Gastrocnemius medialis (tissue), 4 donors: ENCODE measurements at regions of chr2 and their contacts with region 1.

Region 1: GRCh38 chr2:186503848-186504606 is 18.0 kb downstream of the ZC3H15 start:
- DNase-seq: no peak
- ATAC-seq: no peak
- H3K4me3 ChIP-seq: no peak overlapping the region
- H3K27ac ChIP-seq: no peak overlapping the region
- H3K4me1 ChIP-seq: no peaks in the 10 kb centered on the region
- H3K27me3 ChIP-seq: no peaks in the 10 kb centered on the region
- CTCF ChIP-seq: peak; percentile 18 to 60 (median 55)
- POLR2A ChIP-seq: no peak

Region 2: DNA sequence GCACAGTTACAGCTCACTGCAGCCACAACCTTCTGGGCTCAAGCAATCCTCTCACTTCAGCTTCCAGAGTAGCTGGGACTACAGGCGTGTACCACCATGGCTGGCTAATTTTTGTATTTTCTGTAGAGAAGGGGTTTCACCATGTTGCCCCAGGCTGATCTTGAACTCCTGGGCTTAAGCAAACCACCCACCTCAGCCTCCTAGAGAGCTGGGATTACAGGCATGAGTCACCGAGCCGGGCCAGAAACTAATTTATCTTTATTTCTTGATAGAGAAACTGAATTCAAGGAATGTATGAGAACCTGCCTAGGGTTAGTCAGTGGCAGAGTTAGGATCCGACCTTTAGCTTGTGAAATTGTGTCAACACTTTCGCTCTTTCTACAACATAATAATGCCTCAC is 66.6 kb after region 1 on chr2:
- in situ Hi-C with region 1: no loop called
- intact Hi-C with region 1: no loop called
- DNase-seq: no peak
- ATAC-seq: no peak
- H3K4me3 ChIP-seq: no peak overlapping the region
- H3K27ac ChIP-seq: no peak overlapping the region
- H3K4me1 ChIP-seq: no peaks in the 10 kb centered on the region
- H3K27me3 ChIP-seq: no peaks in the 10 kb centered on the region
- CTCF ChIP-seq: no peak
- POLR2A ChIP-seq: no peak

Region 3: DNA sequence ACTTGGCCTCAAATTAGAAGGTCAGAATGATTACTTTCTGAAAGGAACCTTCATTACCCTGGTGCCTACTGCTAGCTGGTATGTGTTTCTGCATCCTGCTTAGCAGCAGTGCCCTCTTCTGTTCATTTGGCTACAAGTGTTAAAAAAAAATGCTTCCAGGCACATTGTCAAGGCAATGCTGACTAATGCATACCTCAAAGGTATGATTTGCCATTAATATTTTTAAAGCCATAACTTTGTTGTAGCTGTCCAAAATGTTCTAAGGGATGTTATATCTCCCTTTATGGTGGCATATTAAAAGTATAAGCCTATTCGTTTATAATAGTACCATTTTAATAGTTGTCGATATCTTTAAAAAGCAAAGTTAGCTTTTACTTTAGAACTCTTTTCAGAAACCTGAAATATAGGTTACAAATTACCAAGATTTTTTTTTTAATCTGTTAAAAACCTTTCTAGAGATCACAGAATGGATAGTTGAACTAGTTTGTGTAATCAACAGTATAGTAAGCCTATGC is 137.8 kb after region 1 on chr2:
- in situ Hi-C with region 1: loop called (anchors 5 to 10 kb)
- intact Hi-C with region 1: loop called (anchors 1 kb)
- DNase-seq: peak in 1 of 2 donors; percentile 22
- ATAC-seq: peak; percentile 88 to 96
- H3K4me3 ChIP-seq: no peak overlapping the region
- H3K27ac ChIP-seq: peak overlapping the region in 1 of 4 donors; percentile 11
- H3K4me1 ChIP-seq: no peaks in the 10 kb centered on the region
- H3K27me3 ChIP-seq: no peaks in the 10 kb centered on the region
- CTCF ChIP-seq: peak; percentile 33 to 77 (median 53)
- POLR2A ChIP-seq: no peak

Region 4: GRCh38 chr2:186648130-186648529 is 144.1 kb after region 1 on chr2:
- in situ Hi-C with region 1: loop called (anchors 5 to 10 kb)
- intact Hi-C with region 1: no loop called
- DNase-seq: no peak
- ATAC-seq: no peak
- H3K4me3 ChIP-seq: no peak overlapping the region
- H3K27ac ChIP-seq: no peak overlapping the region
- H3K4me1 ChIP-seq: no peaks in the 10 kb centered on the region
- H3K27me3 ChIP-seq: no peaks in the 10 kb centered on the region
- CTCF ChIP-seq: no peak
- POLR2A ChIP-seq: no peak